ENCODE measurements at regions of chr9 and their contacts with region 1.

Region 1: DNA sequence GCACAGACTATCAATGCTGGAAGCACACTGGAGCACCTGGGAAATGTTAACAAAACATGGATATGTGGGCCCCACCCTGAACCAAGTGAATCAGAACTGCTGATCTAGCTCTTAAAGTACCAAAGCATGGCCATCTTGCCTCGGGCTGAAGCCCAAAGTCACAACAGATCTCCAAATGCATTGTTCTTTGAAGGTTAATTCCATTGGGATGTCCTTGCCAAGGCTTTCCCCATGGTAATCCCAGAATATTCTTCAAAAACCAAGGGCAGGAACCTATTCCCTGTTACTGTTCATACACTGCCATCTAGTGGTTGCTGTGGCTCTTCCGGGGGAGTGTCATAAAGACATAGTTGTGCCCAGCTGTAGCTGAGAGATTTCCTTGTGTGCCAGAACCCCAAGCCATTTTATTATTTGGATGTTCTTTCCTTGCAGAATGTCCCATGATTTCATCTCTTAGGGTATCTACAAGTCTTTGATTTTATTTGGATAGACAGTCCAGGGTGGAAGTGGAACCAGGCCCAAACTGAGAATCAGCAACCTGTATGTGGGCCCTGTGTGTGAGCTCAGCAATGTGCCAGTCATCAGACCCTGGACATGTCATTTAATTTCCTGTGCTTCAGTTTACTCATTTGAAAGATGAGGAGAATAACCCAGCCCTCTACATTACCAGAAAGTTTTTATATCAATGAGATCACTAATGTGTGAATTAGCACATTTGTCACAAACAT is 290.0 kb downstream of the ACTL7B start:
- DNase-seq: peak; percentile 63 to 71 (median 71)
- H3K4me3 ChIP-seq: no peak overlapping the region
- H3K27ac ChIP-seq: no peak overlapping the region
- H3K4me1 ChIP-seq: peaks cover 0 to 6% (median 1%) of the 10 kb centered on the region in 4 experiments
- H3K27me3 ChIP-seq: no peaks in the 10 kb centered on the region

Region 2: DNA sequence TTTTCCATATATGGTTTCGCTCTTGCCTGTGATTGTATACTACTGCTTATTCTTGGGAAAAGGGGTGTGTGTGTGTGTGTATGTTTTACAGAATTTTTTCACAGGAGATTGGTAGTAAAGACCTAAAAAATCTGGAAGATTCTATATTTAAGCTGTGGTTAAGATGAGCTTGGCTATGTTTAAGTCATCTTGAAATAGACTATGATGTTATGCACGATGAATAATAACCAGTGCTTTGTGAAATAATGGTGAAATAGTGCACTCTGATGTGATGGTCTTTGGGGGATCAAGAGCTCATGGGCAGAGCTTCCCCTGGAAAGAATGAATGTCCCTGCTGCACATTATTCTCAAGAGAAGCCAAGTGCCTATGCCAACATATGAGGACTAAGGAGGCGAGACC is 11.0 kb before region 1 on chr9:
- CTCF ChIA-PET with region 1: interaction called, 14 read pairs
- POLR2A ChIA-PET with region 1: no interaction called
- DNase-seq: no peak
- H3K4me3 ChIP-seq: no peak overlapping the region
- H3K27ac ChIP-seq: no peak overlapping the region
- H3K4me1 ChIP-seq: no peaks in the 10 kb centered on the region
- H3K27me3 ChIP-seq: no peaks in the 10 kb centered on the region

Region 3: GRCh38 chr9:108582726-108583125 is 16.9 kb after region 1 on chr9:
- CTCF ChIA-PET with region 1: interaction called, 10 read pairs
- POLR2A ChIA-PET with region 1: no interaction called
- DNase-seq: peak in 2 of 3 donors; percentile 14 to 42
- H3K4me3 ChIP-seq: no peak overlapping the region
- H3K27ac ChIP-seq: no peak overlapping the region
- H3K4me1 ChIP-seq: peaks cover 0 to 8% (median 3%) of the 10 kb centered on the region in 4 experiments
- H3K27me3 ChIP-seq: no peaks in the 10 kb centered on the region

Measured in common myeloid progenitor, CD34-positive (primary cell).